ENCODE measurements at regions of chr2 and their contacts with region 1.

Region 1: GRCh38 chr2:45643543-45644542 is 7.6 kb upstream of the PRKCE start:
- DNase-seq: peak; percentile 69 to 84 (median 74)
- ATAC-seq: peak; percentile 99
- H3K4me3 ChIP-seq: no peak overlapping the region
- H3K4me1 ChIP-seq: peaks cover 18% of the 10 kb centered on the region
- CTCF ChIP-seq: peak; percentile 92

Region 2: DNA sequence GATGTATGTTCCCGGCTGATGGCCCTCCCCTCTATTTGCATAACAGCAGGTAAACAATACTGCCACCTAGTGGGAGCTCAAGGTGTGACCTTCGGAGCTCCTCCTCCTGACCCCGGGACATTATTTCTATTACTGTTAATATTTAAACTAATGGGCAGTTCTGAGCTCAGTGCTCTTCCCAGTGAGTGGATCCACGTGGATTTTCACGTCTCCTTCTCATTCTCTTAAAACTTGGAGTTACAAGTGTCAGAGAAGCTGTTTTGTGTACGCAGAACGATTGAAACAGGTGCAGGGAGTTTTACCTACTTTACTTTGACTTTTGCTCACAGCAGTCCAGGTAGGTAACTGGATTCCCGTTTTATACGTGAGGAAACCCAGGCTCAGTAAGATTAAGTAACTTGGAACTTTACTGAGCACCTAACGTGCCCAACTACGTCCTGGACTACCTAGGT is 134.9 kb after region 1 on chr2:
- intact Hi-C with region 1: loop called in 1 of 2 experiments (anchors 2 kb)
- DNase-seq: peak in 2 of 3 donors; percentile 43 to 88
- ATAC-seq: peak; percentile 84
- H3K4me3 ChIP-seq: no peak overlapping the region
- H3K4me1 ChIP-seq: no peaks in the 10 kb centered on the region
- CTCF ChIP-seq: peak; percentile 71

Region 3: GRCh38 chr2:45935791-45936622 is 292.2 kb after region 1 on chr2:
- intact Hi-C with region 1: loop called (anchors 5 kb)
- DNase-seq: peak; percentile 85 to 88 (median 87)
- ATAC-seq: peak; percentile 87
- H3K4me3 ChIP-seq: no peak overlapping the region
- H3K4me1 ChIP-seq: peaks cover 16% of the 10 kb centered on the region
- CTCF ChIP-seq: peak; percentile 25

Measured in mucosa of descending colon (tissue), 3 donors.